ENCODE measurements at regions of chr5 and their contacts with region 1.

Region 1: DNA sequence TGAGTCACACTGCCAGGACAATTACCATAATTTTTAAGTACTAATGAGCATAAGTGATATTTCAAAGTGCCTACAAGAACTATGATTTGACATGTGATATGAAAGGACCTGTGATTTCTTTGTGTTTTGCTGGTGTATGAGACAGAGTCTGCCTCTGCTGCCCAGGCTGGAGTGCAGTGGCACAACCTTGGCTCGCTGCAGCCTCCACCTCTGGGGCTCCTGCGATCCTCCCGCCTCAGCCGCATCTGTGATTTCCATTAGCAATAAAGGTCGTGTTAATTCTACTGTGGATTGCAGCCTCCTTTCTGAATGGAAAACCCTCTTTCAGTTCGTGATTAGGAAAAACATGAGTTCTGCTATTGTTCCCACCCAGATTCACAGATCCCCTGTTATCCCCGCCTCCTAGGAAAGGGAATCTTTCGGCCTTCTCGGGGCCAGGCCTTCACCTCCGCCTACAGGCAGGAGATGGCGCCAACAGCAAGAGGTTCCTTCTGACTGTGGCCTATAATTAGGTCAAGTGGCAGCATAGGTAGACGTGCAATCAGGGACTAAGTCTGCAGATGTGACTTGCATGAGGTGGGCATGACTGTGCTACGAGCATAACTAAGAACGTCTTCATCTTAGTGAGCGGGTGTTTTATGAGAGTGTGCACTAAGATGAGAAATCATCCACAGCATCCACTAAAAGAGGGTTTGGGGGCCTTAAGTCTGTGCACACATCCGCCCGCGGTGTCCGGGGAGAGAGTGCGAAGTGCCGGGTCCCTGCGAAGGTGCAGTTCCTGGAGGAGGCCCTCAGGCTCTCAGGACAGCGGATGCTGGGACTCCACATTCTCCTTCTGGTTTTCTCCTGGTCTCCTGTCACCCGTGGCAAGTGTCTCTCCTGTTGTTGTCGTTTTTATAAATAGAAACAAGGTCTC is 23.1 kb downstream of the TRIM7 start:
- DNase-seq: peak in 1 of 2 donors; percentile 70
- ATAC-seq: peak; percentile 88 to 89
- H3K4me3 ChIP-seq: no peak overlapping the region
- H3K27ac ChIP-seq: peak overlapping the region in 3 of 4 donors; percentile 28 to 48 (median 41)
- H3K4me1 ChIP-seq: peaks cover 4 to 7% of the 10 kb centered on the region in 2 donors
- H3K27me3 ChIP-seq: no peaks in the 10 kb centered on the region
- CTCF ChIP-seq: peak; percentile 76 to 88 (median 79)
- POLR2A ChIP-seq: no peak

Region 2: GRCh38 chr5:181281077-181281983 is 99.4 kb after region 1 on chr5:
- in situ Hi-C with region 1: no loop called
- intact Hi-C with region 1: loop called (anchors 5 kb)
- DNase-seq: no peak
- ATAC-seq: no peak
- H3K4me3 ChIP-seq: no peak overlapping the region
- H3K27ac ChIP-seq: no peak overlapping the region
- H3K4me1 ChIP-seq: no peaks in the 10 kb centered on the region
- H3K27me3 ChIP-seq: no peaks in the 10 kb centered on the region
- CTCF ChIP-seq: no peak
- POLR2A ChIP-seq: no peak